ENCODE measurements at regions of chr16 and their contacts with region 1.

Region 1: GRCh38 chr16:84617791-84618580 is at the start of gene COTL1:
- DNase-seq: peak; percentile 95
- ATAC-seq: peak; percentile 67
- H3K4me3 Mint-ChIP-seq: peak within 1 kb of the TSS; percentile 96
- H3K27ac Mint-ChIP-seq: peak within 1 kb of the TSS; percentile 77
- H3K4me1 Mint-ChIP-seq: peaks cover 48% of the 10 kb centered on the region
- H3K27me3 Mint-ChIP-seq: peaks cover 11% of the 10 kb centered on the region
- CTCF ChIP-seq: no peak
- total RNA-seq, gene COTL1: 102 to 122 TPM (median 122 TPM) in 3 replicates

Region 2: DNA sequence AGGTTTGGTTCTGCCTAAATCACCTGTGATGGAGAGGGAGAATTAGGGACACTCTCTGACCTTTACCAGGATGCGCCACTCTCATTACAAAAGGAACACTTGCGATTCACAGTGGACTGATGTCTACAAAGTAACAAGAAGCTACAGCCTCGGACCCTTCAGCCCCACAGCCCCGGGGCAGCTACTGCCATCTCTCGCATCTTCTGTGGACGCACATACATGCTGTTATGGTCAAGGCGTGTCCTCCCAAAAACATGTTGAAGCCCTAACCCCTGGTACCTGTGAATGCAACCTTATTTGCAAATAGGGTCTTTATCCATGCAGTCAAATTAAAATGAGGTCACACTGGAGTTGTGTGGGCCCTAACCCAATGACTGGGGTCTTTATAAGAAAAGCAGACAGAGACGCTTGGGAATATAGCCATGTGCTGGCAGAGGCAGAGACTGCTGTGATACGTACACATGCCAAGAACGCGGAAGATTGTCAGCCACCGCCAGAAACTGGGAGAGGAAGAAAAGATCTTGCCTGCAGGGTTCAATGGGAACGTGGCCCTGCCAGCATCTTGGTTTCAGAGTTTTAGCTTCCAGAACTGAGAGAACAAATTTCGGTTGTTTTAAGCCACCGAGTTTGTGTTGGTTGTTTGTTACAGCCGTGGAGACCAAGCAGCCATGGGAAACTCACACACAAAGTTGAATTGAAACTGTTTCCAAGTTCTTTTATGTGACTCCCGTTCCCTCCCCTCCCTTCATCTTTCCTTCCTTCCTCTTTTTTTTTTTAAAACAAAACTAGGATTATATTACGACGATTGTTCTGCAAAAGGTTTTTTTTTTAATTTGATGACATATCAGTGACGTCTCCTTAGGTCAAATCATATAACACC is 226.6 kb before region 1 on chr16:
- CTCF ChIA-PET with region 1: no interaction called
- POLR2A ChIA-PET with region 1: no interaction called
- DNase-seq: no peak
- ATAC-seq: no peak
- H3K4me3 Mint-ChIP-seq: no peak overlapping the region
- H3K27ac Mint-ChIP-seq: no peak overlapping the region
- H3K4me1 Mint-ChIP-seq: peaks cover 12% of the 10 kb centered on the region
- H3K27me3 Mint-ChIP-seq: no peaks in the 10 kb centered on the region; the same call in 1 of the 2 replicates
- CTCF ChIP-seq: no peak

Region 3: GRCh38 chr16:84423416-84423837 is 194.6 kb before region 1 on chr16:
- CTCF ChIA-PET with region 1: no interaction called
- POLR2A ChIA-PET with region 1: no interaction called
- DNase-seq: no peak
- ATAC-seq: peak; percentile 69
- H3K4me3 Mint-ChIP-seq: no peak overlapping the region
- H3K27ac Mint-ChIP-seq: no peak overlapping the region; the same call in 1 of the 2 replicates
- H3K4me1 Mint-ChIP-seq: no peaks in the 10 kb centered on the region
- H3K27me3 Mint-ChIP-seq: peaks cover 3% of the 10 kb centered on the region; the same call in 1 of the 2 replicates
- CTCF ChIP-seq: no peak

Region 4: GRCh38 chr16:84511180-84511824 is 106.7 kb before region 1 on chr16:
- CTCF ChIA-PET with region 1: interaction called, 44 read pairs
- POLR2A ChIA-PET with region 1: no interaction called
- DNase-seq: peak; percentile 83
- ATAC-seq: peak; percentile 72
- H3K4me3 Mint-ChIP-seq: peak overlapping the region; percentile 37
- H3K27ac Mint-ChIP-seq: no peak overlapping the region
- H3K4me1 Mint-ChIP-seq: peaks cover 35% of the 10 kb centered on the region
- H3K27me3 Mint-ChIP-seq: no peaks in the 10 kb centered on the region
- CTCF ChIP-seq: peak; percentile 91

Region 5: GRCh38 chr16:84599521-84600202 is 18.3 kb before region 1 on chr16:
- CTCF ChIA-PET with region 1: interaction called, 14 read pairs
- POLR2A ChIA-PET with region 1: interaction called, 3 read pairs
- DNase-seq: peak; percentile 74
- ATAC-seq: peak; percentile 74
- H3K4me3 Mint-ChIP-seq: peak overlapping the region; percentile 41
- H3K27ac Mint-ChIP-seq: peak overlapping the region; percentile 29
- H3K4me1 Mint-ChIP-seq: peaks cover 63% of the 10 kb centered on the region
- H3K27me3 Mint-ChIP-seq: no peaks in the 10 kb centered on the region; the same call in 1 of the 2 replicates
- CTCF ChIP-seq: no peak

Region 6: GRCh38 chr16:84635699-84636098 is 17.7 kb after region 1 on chr16:
- CTCF ChIA-PET with region 1: interaction called, 10 read pairs
- POLR2A ChIA-PET with region 1: no interaction called
- DNase-seq: no peak
- ATAC-seq: no peak
- H3K4me3 Mint-ChIP-seq: no peak overlapping the region
- H3K27ac Mint-ChIP-seq: no peak overlapping the region
- H3K4me1 Mint-ChIP-seq: peaks cover 9% of the 10 kb centered on the region
- H3K27me3 Mint-ChIP-seq: no peaks in the 10 kb centered on the region
- CTCF ChIP-seq: no peak

Region 7: DNA sequence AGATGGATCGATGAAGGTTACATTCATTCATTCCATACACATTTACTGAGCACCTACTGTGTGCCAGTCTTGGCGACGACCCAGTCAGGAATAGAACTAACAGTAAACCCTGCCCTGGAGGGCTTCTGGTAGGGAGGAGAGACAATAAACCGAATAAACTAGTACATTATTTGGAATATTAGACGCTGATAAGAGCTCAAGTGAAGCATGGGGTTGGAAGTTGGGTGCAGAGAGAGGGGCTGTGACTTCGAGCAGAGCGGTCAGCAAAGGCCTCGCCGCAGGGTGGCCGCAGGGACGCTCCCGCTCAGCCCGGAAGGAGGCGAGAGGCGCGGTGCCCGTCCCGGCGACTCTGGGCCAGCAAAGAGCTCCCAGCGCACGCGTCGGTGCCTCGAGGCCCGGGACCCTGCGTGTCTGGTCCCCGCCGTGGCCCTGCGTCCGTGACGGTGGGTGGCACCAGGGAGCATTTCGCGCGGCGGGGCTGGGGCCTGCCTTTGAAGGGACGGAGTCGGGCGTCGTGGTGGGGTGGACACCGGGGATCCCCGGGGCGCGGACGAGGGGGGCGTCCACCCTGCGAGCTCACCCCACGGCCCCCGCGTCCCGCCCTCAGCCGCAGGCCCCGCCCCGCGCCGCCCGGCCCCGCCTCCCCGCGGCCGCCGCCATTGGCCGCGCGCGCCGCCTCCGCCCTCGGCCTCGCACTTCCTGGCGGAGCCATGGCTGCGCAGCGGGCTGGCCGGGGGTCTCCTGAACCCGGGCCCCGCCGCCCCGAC is 30.0 kb after region 1 on chr16 and contains the start of gene KLHL36:
- CTCF ChIA-PET with region 1: interaction called, 15 read pairs
- POLR2A ChIA-PET with region 1: no interaction called
- DNase-seq: no peak
- ATAC-seq: peak; percentile 84
- H3K4me3 Mint-ChIP-seq: peak within 1 kb of the TSS; percentile 81
- H3K27ac Mint-ChIP-seq: 0 out of 2 replicates have a peak within 1 kb of the TSS, but pooled peaks have one; percentile 29
- H3K4me1 Mint-ChIP-seq: peaks cover 21% of the 10 kb centered on the region
- H3K27me3 Mint-ChIP-seq: peaks cover 19% of the 10 kb centered on the region
- CTCF ChIP-seq: no peak
- total RNA-seq, gene KLHL36: 55.7 to 56.1 TPM (median 55.8 TPM) in 3 replicates

Region 8: GRCh38 chr16:84765616-84766580 is 147.9 kb after region 1 on chr16:
- CTCF ChIA-PET with region 1: no interaction called
- POLR2A ChIA-PET with region 1: no interaction called
- DNase-seq: no peak
- ATAC-seq: no peak
- H3K4me3 Mint-ChIP-seq: no peak overlapping the region
- H3K27ac Mint-ChIP-seq: peak overlapping the region; percentile 20; the same call in 1 of the 2 replicates
- H3K4me1 Mint-ChIP-seq: no peaks in the 10 kb centered on the region
- H3K27me3 Mint-ChIP-seq: no peaks in the 10 kb centered on the region
- CTCF ChIP-seq: no peak